Heart right ventricle (tissue), 16 donors: ENCODE measurements at regions of chr15 and their contacts with region 1.

Region 1: GRCh38 chr15:75123395-75123794 is 78.3 kb upstream of the C15orf39 start:
- DNase-seq: no peak
- ATAC-seq: no peak
- H3K4me3 ChIP-seq: no peak overlapping the region
- H3K27ac ChIP-seq: peak overlapping the region in 1 of 10 donors; percentile 84
- H3K4me1 ChIP-seq: peaks cover 0 to 42% (median 10%) of the 10 kb centered on the region in 9 donors
- H3K27me3 ChIP-seq: no peaks in the 10 kb centered on the region
- CTCF ChIP-seq: no peak

Region 2: DNA sequence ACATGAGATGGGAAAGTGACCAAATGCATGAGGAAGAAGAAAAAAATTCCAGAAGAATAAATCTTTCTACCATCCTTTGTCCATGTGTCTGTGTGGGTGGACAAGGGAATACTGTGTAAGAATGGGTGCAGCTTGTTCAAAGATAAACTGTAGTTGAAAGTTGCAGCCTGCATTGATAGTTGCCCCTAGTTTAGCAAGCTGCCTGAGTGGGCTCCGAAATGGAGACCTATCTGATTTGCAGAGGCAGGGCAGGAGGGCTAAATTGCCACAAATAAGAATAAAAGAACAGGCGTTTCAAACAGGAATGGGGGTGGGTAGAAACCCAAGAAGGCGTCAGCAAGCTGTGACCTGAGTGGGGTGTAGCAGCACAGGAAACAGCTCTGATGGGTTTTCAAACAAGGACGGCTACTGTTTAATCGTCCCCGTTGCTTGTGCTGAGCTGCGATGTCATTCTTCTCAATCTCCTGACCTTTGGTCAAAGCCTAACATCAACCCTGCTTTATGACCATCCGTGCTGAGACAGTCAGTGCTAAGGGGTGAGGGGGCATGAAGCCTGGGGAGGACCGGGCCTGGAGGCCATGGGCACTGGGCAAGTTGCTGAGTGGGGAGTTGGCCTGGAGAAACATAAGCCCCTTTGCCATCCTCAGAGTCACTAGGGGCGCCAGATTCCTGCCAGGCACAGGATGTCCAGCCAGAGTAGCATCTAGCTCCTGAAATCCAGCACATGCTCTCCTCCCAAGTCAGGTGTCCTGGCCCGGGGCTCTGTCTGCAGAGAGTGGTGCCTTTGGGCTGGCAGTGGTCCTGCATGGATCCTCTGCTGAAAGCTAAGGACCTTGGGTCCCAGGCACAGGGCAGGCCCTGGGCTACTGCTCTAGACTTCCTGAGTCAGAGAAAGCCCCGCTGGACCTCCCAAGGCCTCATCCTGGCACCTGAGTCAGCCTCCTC is 59.1 kb after region 1 on chr15:
- intact Hi-C with region 1: loop called in 1 of 10 experiments (anchors 10 kb)
- DNase-seq: no peak
- ATAC-seq: peak in 2 of 8 donors; percentile 15 to 29
- H3K4me3 ChIP-seq: no peak overlapping the region
- H3K27ac ChIP-seq: peak overlapping the region in 3 of 10 donors; percentile 21 to 54 (median 43)
- H3K4me1 ChIP-seq: peaks cover 15 to 51% (median 35%) of the 10 kb centered on the region in 9 donors
- H3K27me3 ChIP-seq: peaks cover 0 to 18% (median 0%) of the 10 kb centered on the region in 7 donors
- CTCF ChIP-seq: no peak

Region 3: GRCh38 chr15:75229191-75230015 is 106.0 kb after region 1 on chr15:
- intact Hi-C with region 1: no loop called
- DNase-seq: no peak
- ATAC-seq: no peak
- H3K4me3 ChIP-seq: no peak overlapping the region
- H3K27ac ChIP-seq: no peak overlapping the region
- H3K4me1 ChIP-seq: peaks cover 0 to 7% (median 0%) of the 10 kb centered on the region in 9 donors
- H3K27me3 ChIP-seq: peaks cover 0 to 16% (median 0%) of the 10 kb centered on the region in 7 donors
- CTCF ChIP-seq: no peak

Region 4: DNA sequence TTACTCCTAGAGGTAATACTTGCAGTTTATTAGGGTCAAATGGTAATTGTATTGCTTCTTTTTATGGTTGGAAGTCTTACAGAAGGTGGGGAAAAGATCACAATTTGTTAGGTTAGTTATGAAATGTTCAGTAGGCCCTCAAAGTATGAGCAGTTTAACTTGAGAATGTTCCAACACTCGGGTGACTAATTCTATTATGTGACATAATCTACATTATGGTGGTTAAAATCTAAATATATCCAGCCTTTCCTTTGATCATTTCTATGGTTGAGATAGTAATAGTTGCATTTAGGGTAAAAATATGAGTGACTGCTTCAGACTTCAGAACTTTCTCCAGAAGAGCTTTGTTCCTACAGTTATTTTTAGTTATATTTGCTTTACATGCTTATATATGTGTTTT is 760.6 kb after region 1 on chr15:
- intact Hi-C with region 1: no loop called
- DNase-seq: no peak
- ATAC-seq: no peak
- H3K4me3 ChIP-seq: no peak overlapping the region
- H3K27ac ChIP-seq: no peak overlapping the region
- H3K4me1 ChIP-seq: no peaks in the 10 kb centered on the region
- H3K27me3 ChIP-seq: no peaks in the 10 kb centered on the region
- CTCF ChIP-seq: no peak